GM10248 (cell line): ENCODE measurements at regions of chr16 and their contacts with region 1.

Region 1: GRCh38 chr16:31191697-31192428 is 10.7 kb downstream of the PYCARD start:
- DNase-seq: no peak
- CTCF ChIP-seq: no peak

Region 2: GRCh38 chr16:31202414-31203375 is 10.8 kb after region 1 on chr16 and contains the start of gene PYCARD:
- CTCF ChIA-PET with region 1: interaction called, 3 read pairs
- POLR2A ChIA-PET with region 1: interaction called, 21 read pairs
- DNase-seq: peak; percentile 76
- CTCF ChIP-seq: no peak

Region 3: DNA sequence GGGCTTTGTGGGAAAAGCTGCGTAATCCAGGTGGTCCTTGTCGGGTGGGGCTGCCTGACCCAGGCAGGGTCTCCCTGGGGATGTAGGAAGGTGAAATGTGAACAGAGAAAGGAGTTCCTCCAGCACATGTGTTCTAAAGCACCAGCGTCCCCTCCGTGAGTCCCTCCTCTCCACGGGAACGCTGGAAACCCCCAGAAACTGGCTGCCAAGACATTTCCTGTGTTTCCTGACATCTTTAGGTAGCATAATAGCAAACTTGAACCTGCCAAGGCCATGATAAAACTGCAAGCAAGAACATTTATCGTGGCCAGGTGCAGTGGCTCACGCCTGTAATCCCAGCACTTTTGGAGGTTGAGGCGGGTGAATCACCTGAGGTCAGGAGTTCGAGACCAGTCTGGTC is 37.6 kb after region 1 on chr16:
- CTCF ChIA-PET with region 1: no interaction called
- POLR2A ChIA-PET with region 1: no interaction called
- DNase-seq: peak; percentile 15
- CTCF ChIP-seq: no peak